ENCODE measurements at regions of chr17 and their contacts with region 1.

Region 1: GRCh38 chr17:74368092-74369081 is 1.1 kb downstream of the GPR142 start:
- DNase-seq: peak; percentile 49 to 84 (median 78)
- ATAC-seq: peak; percentile 83
- H3K4me3 ChIP-seq: peak overlapping the region; percentile 3 to 26
- H3K4me3 Mint-ChIP-seq: peak overlapping the region; percentile 54
- H3K27ac ChIP-seq: no peak overlapping the region
- H3K27ac Mint-ChIP-seq: no peak overlapping the region
- H3K4me1 ChIP-seq: peaks cover 16% of the 10 kb centered on the region
- H3K4me1 Mint-ChIP-seq: peaks cover 12% of the 10 kb centered on the region
- H3K27me3 ChIP-seq: peaks cover 0 to 3% of the 10 kb centered on the region in 2 experiments
- H3K27me3 Mint-ChIP-seq: peaks cover 6% of the 10 kb centered on the region
- CTCF ChIP-seq: peak; percentile 85

Region 2: GRCh38 chr17:74212913-74213791 is 155.2 kb before region 1 on chr17 and contains the start of gene TTYH2:
- CTCF ChIA-PET with region 1: interaction called, 10 read pairs
- POLR2A ChIA-PET with region 1: interaction called, 3 read pairs
- intact Hi-C with region 1: no loop called
- DNase-seq: peak; percentile 34 to 86 (median 70)
- ATAC-seq: peak; percentile 69
- H3K4me3 ChIP-seq: peak within 1 kb of the TSS; percentile 48 to 50
- H3K4me3 Mint-ChIP-seq: peak within 1 kb of the TSS; percentile 88
- H3K27ac ChIP-seq: peak within 1 kb of the TSS; percentile 28 to 55
- H3K27ac Mint-ChIP-seq: peak within 1 kb of the TSS; percentile 89
- H3K4me1 ChIP-seq: peaks cover 37% of the 10 kb centered on the region
- H3K4me1 Mint-ChIP-seq: peaks cover 43% of the 10 kb centered on the region
- H3K27me3 ChIP-seq: no peaks in the 10 kb centered on the region
- H3K27me3 Mint-ChIP-seq: no peaks in the 10 kb centered on the region
- CTCF ChIP-seq: no peak
- total RNA-seq, gene TTYH2: 4.6 to 5.6 TPM

Region 3: GRCh38 chr17:74249590-74250270 is 118.7 kb before region 1 on chr17:
- CTCF ChIA-PET with region 1: no interaction called
- POLR2A ChIA-PET with region 1: no interaction called
- intact Hi-C with region 1: no loop called
- DNase-seq: no peak
- ATAC-seq: no peak
- H3K4me3 ChIP-seq: no peak overlapping the region
- H3K4me3 Mint-ChIP-seq: no peak overlapping the region
- H3K27ac ChIP-seq: no peak overlapping the region
- H3K27ac Mint-ChIP-seq: no peak overlapping the region
- H3K4me1 ChIP-seq: no peaks in the 10 kb centered on the region
- H3K4me1 Mint-ChIP-seq: peaks cover 4% of the 10 kb centered on the region
- H3K27me3 ChIP-seq: no peaks in the 10 kb centered on the region
- H3K27me3 Mint-ChIP-seq: no peaks in the 10 kb centered on the region
- CTCF ChIP-seq: no peak

Region 4: GRCh38 chr17:74354123-74354522 is 14.3 kb before region 1 on chr17:
- CTCF ChIA-PET with region 1: interaction called, 20 read pairs
- POLR2A ChIA-PET with region 1: no interaction called
- intact Hi-C with region 1: no loop called
- DNase-seq: peak; percentile 12 to 67 (median 41)
- ATAC-seq: peak; percentile 62
- H3K4me3 ChIP-seq: no peak overlapping the region
- H3K4me3 Mint-ChIP-seq: no peak overlapping the region
- H3K27ac ChIP-seq: no peak overlapping the region
- H3K27ac Mint-ChIP-seq: no peak overlapping the region
- H3K4me1 ChIP-seq: peaks cover 7% of the 10 kb centered on the region
- H3K4me1 Mint-ChIP-seq: peaks cover 10% of the 10 kb centered on the region
- H3K27me3 ChIP-seq: peaks cover 13 to 18% of the 10 kb centered on the region in 2 experiments
- H3K27me3 Mint-ChIP-seq: peaks cover 47% of the 10 kb centered on the region
- CTCF ChIP-seq: peak; percentile 54

Region 5: DNA sequence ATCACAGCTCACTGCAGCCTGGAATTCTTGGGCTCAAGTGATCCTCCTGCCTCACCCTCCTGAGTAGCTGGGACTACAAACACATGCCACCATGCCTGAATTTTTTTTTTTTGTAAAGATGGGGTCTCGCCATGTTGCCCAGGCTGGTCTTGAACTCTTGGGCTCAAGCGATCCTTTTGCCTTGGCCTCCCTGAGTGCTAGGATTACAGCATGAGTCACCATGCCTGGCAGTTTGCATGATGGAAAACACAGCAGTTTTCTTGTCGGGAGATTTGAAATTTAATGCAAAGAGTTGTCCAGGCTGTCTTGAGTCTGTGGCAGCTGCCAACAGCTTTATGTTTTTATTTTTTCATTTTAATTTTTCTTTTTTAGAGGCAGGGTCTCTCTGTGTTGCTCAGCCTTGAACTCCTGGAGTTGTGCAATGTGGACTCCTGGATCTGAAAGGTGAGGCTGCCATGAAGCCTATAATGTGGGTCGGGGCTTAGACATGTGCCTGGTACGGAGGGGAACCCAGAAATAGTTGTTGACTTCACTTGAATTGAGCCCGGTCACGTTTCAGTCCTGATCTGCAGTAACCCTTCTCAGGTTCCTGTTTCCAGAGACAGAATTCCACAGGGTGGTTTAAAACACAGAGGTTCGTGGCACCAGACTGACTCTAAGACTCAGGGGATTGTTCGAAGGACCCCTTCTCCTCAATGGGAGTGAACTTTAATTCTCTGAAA is 116.8 kb after region 1 on chr17:
- CTCF ChIA-PET with region 1: interaction called, 97 read pairs
- POLR2A ChIA-PET with region 1: no interaction called
- intact Hi-C with region 1: no loop called
- DNase-seq: no peak
- ATAC-seq: no peak
- H3K4me3 ChIP-seq: no peak overlapping the region
- H3K4me3 Mint-ChIP-seq: no peak overlapping the region
- H3K27ac ChIP-seq: no peak overlapping the region
- H3K27ac Mint-ChIP-seq: no peak overlapping the region
- H3K4me1 ChIP-seq: peaks cover 3% of the 10 kb centered on the region
- H3K4me1 Mint-ChIP-seq: peaks cover 7% of the 10 kb centered on the region
- H3K27me3 ChIP-seq: no peaks in the 10 kb centered on the region
- H3K27me3 Mint-ChIP-seq: no peaks in the 10 kb centered on the region
- CTCF ChIP-seq: no peak

Region 6: GRCh38 chr17:74493381-74493833 is 125.0 kb after region 1 on chr17:
- CTCF ChIA-PET with region 1: interaction called, 97 read pairs
- POLR2A ChIA-PET with region 1: no interaction called
- intact Hi-C with region 1: loop called (anchors 1 kb)
- DNase-seq: peak; percentile 51 to 82 (median 73)
- ATAC-seq: peak; percentile 83
- H3K4me3 ChIP-seq: no peak overlapping the region
- H3K4me3 Mint-ChIP-seq: no peak overlapping the region
- H3K27ac ChIP-seq: no peak overlapping the region
- H3K27ac Mint-ChIP-seq: no peak overlapping the region
- H3K4me1 ChIP-seq: no peaks in the 10 kb centered on the region
- H3K4me1 Mint-ChIP-seq: peaks cover 3% of the 10 kb centered on the region
- H3K27me3 ChIP-seq: no peaks in the 10 kb centered on the region
- H3K27me3 Mint-ChIP-seq: no peaks in the 10 kb centered on the region
- CTCF ChIP-seq: peak; percentile 93

Region 7: DNA sequence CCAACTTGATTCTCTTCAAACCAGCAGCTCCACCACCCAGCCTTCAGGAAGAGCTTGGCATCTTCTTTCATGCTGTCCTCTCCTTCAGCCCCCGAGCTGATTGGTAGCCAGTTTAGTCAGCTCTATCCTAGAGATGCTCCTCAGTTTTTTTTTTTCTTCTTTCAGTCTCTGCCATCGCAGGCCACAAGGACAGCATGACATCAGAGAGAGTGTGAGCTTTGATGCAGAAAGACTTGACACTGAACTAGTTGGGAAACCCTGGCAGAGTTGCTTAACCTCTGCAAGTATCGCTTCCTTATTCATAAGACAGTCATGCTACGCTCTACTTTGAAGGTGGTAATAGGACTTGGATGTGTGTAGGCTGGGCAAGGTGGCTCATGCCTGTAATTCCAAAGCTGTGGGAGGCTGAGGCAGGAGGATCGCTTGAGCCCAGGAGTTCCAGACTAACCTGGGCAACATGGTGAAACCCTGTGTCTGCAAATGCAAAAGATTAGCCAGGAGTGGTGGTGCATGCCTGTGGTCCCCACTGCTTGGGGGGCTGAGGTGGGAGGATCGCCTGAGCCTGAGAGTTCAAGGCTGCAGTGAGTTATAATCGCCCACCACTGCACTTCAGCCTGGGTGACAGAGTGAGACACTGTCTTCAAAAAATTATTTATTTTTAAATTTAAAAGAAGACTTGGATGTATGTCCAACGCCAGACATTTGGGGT is 160.3 kb after region 1 on chr17:
- CTCF ChIA-PET with region 1: interaction called, 7 read pairs
- POLR2A ChIA-PET with region 1: interaction called, 3 read pairs
- intact Hi-C with region 1: loop called (anchors 2 kb)
- DNase-seq: peak in 3 of 9 experiments; percentile 7 to 47 (median 19)
- ATAC-seq: no peak
- H3K4me3 ChIP-seq: no peak overlapping the region
- H3K4me3 Mint-ChIP-seq: no peak overlapping the region
- H3K27ac ChIP-seq: no peak overlapping the region
- H3K27ac Mint-ChIP-seq: no peak overlapping the region
- H3K4me1 ChIP-seq: no peaks in the 10 kb centered on the region
- H3K4me1 Mint-ChIP-seq: peaks cover 8% of the 10 kb centered on the region
- H3K27me3 ChIP-seq: peaks cover 0 to 5% of the 10 kb centered on the region in 2 experiments
- H3K27me3 Mint-ChIP-seq: peaks cover 38% of the 10 kb centered on the region
- CTCF ChIP-seq: no peak

Region 8: DNA sequence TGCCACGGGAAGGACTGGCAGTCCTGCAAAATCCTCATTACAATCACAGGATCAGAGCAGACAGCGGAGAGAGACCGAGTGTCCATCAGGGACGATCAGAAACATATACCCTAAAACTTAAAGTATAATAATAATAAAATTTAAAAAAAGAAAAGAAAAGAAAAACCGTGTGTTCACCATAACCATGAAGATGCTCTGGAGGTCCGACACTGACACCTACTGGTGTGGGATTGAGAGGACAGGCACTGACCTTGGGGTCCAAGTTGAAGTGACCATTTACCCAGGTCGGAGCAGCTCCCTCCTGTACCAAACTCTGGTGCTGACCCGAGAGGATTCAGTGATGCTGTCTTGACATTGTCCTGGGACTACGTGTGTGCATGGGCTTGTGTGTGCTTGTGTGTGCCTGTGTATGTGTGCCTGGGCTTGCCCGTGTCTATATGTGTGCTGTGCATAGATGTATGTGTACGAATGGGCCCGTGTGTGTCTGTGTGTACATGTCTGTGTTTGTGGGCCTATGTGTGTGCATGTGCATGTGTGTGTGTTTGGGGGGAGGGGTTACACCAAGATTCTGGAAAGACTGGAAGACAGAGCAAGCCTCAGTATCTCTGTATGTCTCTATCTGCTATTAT is 233.7 kb after region 1 on chr17:
- CTCF ChIA-PET with region 1: interaction called, 14 read pairs
- POLR2A ChIA-PET with region 1: no interaction called
- intact Hi-C with region 1: loop called (anchors 1 to 5 kb)
- DNase-seq: peak in 5 of 9 experiments; percentile 7 to 54 (median 24)
- ATAC-seq: no peak
- H3K4me3 ChIP-seq: no peak overlapping the region
- H3K4me3 Mint-ChIP-seq: no peak overlapping the region
- H3K27ac ChIP-seq: no peak overlapping the region
- H3K27ac Mint-ChIP-seq: no peak overlapping the region
- H3K4me1 ChIP-seq: peaks cover 32% of the 10 kb centered on the region
- H3K4me1 Mint-ChIP-seq: peaks cover 11% of the 10 kb centered on the region
- H3K27me3 ChIP-seq: peaks cover 0 to 2% of the 10 kb centered on the region in 2 experiments
- H3K27me3 Mint-ChIP-seq: peaks cover 39% of the 10 kb centered on the region
- CTCF ChIP-seq: peak; percentile 40